Astrocyte of the cerebellum (primary cell): ENCODE measurements at regions of chr2 and their contacts with region 1.

Region 1: DNA sequence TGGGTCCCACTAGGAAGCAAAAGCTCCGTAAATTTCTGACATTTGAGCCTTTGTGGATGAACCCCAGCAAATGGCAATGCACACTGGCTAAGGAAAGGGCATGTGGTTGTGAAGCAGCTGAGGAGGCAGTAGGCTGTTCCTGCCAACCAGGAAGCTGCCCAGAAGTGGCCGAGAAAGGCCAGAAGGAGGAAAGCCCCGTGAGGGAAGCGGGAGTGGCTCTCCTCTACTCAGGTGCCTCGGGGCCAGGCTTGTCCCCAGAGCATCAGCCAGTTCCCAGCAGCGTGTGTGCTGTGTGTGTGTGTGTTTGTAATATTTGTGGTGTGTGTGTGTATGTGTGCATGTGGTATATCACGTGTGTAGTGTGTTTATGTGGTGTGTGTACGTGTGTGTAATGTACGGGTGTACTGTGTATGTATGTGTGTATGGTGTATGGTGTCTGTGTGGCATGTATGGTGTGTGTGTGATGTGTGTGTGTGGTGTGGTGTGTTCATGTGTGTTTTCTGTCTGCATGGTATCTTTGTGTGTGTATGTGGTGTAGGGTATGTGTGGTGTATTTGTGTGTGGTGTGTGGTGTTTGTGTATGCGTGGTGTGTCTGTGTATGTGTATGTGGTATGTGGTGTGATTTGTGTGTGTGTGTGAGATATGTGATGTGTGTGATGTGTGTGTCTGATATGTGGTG is 90.6 kb downstream of the APOB start:
- DNase-seq: no peak
- H3K4me3 ChIP-seq: no peak overlapping the region
- CTCF ChIP-seq: no peak

Region 2: GRCh38 chr2:20675701-20676352 is 277.5 kb before region 1 on chr2:
- in situ Hi-C with region 1: loop called (anchors 10 kb)
- DNase-seq: no peak
- H3K4me3 ChIP-seq: no peak overlapping the region
- CTCF ChIP-seq: no peak